Activated T-helper 2 cell treated with anti-CD3 and anti-CD28 coated beads, Interferon-gamma antibody, Interleukin-2, Interleukin-4, amounts not matched to agents 10 μg/mL and 5 μg/mL and 100 μg/mL, durations not matched to agents 14 hours and 24 hours and 36 hours (primary cell): ENCODE measurements at regions of chr6 and their contacts with region 1.

Region 1: DNA sequence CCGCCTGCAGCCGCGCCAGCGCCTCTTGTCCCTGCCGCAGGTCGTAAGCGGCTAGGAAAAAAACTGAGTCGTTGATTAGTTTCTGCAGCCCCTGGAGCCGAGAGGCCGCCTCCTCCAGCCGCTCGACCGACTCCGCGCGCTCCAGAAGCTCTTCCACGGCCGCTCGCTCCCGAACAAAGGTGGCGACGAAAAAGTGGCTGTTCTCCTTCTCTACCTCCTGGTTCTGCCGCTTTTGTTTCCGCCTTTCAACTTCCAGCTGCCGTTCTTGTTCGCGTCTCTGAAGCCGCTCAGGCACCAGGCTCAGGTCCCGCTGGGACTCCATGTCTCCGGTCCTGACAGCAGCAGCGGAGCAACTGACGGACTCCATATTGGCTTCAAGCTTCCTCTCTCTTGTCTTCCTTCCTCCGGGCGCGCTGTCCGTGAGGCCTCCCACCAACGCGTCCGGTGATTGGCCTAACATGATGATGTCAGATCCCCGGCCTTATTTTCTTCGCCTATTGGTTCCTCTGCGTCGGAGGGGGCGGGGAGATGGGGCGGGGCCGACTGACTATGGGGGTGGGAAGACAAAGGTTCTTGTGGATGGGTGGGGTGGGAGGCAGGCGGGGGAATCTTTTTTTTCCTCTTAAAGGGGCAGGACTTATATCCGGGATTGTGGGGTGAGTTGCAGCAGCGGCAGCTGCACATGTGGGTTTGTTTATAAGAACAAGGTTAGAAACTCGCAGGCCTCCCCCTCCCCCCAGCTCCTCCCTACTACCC is at the start of gene TBCC:
- DNase-seq: peak; percentile 92
- H3K4me3 Mint-ChIP-seq: peak within 1 kb of the TSS; percentile 100
- H3K27ac Mint-ChIP-seq: peak within 1 kb of the TSS; percentile 100
- H3K4me1 Mint-ChIP-seq: peaks cover 24% of the 10 kb centered on the region
- H3K27me3 Mint-ChIP-seq: no peaks in the 10 kb centered on the region
- total RNA-seq, gene TBCC: 17.7 and 19.5 TPM in 2 replicates

Region 2: GRCh38 chr6:42563697-42564505 is 182.0 kb before region 1 on chr6 and contains the start of gene UBR2:
- intact Hi-C with region 1: loop called (anchors 10 kb)
- DNase-seq: peak; percentile 91
- H3K4me3 Mint-ChIP-seq: peak within 1 kb of the TSS; percentile 93
- H3K27ac Mint-ChIP-seq: peak within 1 kb of the TSS; percentile 87
- H3K4me1 Mint-ChIP-seq: peaks cover 26% of the 10 kb centered on the region
- H3K27me3 Mint-ChIP-seq: peaks cover 2% of the 10 kb centered on the region
- total RNA-seq, gene UBR2: 28.6 and 29.6 TPM in 2 replicates

Region 3: DNA sequence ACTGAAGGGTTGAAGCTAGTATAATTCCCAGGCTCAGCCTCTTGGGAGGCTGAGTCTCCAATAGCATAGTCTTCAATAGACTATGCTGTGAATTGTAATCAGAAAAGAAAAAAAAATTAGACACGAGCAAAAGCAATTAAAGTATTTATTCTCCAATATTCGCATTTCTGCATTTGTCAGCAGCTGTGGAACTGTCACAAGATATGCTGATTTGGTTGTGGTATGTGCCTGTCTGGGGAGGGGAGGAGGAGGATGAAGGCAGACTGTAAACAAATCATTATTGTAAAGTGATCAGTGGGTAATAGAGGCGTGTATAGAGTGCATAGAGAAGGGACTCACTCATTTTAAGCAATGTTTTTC is 25.8 kb after region 1 on chr6:
- intact Hi-C with region 1: loop called (anchors 1 kb)
- DNase-seq: no peak
- H3K4me3 Mint-ChIP-seq: peak overlapping the region; percentile 74
- H3K27ac Mint-ChIP-seq: peak overlapping the region; percentile 100
- H3K4me1 Mint-ChIP-seq: peaks cover 52% of the 10 kb centered on the region
- H3K27me3 Mint-ChIP-seq: no peaks in the 10 kb centered on the region

Region 4: DNA sequence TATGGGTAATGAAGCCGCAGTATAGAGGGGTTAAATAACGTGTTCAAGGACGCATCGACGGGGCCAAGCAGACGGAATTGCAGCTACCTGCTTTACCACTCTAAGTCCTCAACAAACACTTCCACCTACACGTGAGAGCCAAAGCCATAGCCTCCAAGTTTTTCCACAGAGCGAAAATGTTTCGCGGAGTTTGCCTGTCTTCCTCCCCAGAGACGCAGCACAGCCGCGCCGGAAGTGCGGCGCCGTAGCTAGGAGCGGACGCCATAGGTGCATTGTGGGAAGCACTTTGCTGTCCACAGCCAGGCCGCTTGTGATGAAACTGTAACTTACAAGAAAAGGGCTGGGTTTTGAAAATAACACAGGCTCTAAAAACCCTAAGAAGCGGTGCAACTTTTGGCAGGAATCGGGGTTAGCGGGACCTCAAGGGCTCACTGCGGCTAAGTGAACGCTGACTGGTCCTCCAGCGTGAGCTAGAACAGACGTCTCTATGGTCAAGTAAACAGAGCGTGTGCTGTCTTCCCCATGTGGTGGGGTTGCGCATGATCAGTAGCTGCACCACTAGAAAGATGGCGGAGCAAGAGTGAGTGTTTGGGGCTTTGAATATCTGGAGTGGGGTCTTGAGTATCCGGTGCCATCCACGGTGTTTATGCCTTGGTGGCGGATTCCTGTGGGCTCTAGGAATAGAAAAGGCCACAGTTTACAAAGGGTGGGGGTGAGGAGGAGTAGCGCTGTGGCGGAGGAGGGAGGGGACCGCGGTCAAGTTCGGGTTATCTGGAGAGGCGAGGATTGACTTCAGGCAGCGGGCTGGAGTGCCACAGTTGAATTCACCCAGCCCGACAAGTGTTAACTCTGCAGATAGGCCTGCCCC is 133.7 kb after region 1 on chr6 and contains the start of gene RPL7L1:
- intact Hi-C with region 1: loop called (anchors 1 kb)
- DNase-seq: peak; percentile 84
- H3K4me3 Mint-ChIP-seq: peak within 1 kb of the TSS; percentile 94
- H3K27ac Mint-ChIP-seq: peak within 1 kb of the TSS; percentile 98
- H3K4me1 Mint-ChIP-seq: peaks cover 6% of the 10 kb centered on the region
- H3K27me3 Mint-ChIP-seq: no peaks in the 10 kb centered on the region
- total RNA-seq, gene RPL7L1: 149 and 151 TPM in 2 replicates

Region 5: GRCh38 chr6:42928986-42929820 is 183.3 kb after region 1 on chr6 and contains the start of gene CNPY3:
- intact Hi-C with region 1: loop called (anchors 1 kb)
- DNase-seq: peak; percentile 96
- H3K4me3 Mint-ChIP-seq: peak within 1 kb of the TSS; percentile 96
- H3K27ac Mint-ChIP-seq: peak within 1 kb of the TSS; percentile 91
- H3K4me1 Mint-ChIP-seq: peaks cover 34% of the 10 kb centered on the region
- H3K27me3 Mint-ChIP-seq: no peaks in the 10 kb centered on the region
- total RNA-seq, gene CNPY3: 51.3 and 53.1 TPM in 2 replicates